Activated naive CD8-positive, alpha-beta T cell treated with anti-CD3 and anti-CD28 coated beads, Interleukin-2, amount 10 ng/mL, durations not matched to agents 7 days and 5 days (primary cell): ENCODE measurements at regions of chr2 and their contacts with region 1.

Region 1: DNA sequence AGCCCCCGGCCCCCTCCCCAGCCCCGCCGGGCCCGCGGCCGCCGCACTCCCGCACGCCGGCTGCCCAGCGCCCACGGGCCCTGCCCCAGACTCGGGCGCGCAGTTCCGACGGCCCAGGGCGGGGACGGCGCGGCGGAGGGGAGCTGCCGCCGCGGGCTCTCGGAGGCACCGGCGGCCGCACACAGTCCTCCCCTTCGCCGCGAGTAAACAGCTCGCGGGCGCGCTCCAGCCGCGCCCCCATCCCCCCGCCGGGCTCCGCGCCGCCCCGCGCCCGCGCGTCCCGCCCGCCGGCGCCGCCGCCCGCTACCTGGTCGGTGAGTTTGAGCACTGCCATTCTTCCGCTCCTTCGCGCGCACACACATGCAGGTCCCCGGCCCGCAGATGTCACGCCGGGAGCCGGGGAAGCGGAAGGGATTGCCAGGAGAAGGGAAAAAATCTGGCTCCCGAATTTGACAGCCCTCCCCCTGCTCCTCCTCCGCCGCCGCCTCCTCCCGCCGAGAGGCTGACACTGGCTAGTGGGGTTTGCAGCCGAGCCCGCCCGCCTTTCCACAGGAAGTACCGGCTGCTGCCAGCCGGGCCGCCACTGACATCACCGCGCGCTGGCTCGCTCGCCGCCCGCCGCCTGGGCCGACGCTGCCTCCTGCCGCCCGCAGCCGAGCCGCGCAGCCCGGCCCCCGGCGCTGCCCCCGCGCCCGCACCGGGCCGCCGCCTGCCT is at the start of gene ANKRD44:
- DNase-seq: peak; percentile 92
- ATAC-seq: peak; percentile 65
- H3K4me3 Mint-ChIP-seq: peak within 1 kb of the TSS; percentile 92
- H3K27ac Mint-ChIP-seq: peak within 1 kb of the TSS; percentile 92
- H3K4me1 Mint-ChIP-seq: peaks cover 57% of the 10 kb centered on the region
- H3K27me3 Mint-ChIP-seq: no peaks in the 10 kb centered on the region
- total RNA-seq, gene ANKRD44: 240 to 243 TPM

Region 2: DNA sequence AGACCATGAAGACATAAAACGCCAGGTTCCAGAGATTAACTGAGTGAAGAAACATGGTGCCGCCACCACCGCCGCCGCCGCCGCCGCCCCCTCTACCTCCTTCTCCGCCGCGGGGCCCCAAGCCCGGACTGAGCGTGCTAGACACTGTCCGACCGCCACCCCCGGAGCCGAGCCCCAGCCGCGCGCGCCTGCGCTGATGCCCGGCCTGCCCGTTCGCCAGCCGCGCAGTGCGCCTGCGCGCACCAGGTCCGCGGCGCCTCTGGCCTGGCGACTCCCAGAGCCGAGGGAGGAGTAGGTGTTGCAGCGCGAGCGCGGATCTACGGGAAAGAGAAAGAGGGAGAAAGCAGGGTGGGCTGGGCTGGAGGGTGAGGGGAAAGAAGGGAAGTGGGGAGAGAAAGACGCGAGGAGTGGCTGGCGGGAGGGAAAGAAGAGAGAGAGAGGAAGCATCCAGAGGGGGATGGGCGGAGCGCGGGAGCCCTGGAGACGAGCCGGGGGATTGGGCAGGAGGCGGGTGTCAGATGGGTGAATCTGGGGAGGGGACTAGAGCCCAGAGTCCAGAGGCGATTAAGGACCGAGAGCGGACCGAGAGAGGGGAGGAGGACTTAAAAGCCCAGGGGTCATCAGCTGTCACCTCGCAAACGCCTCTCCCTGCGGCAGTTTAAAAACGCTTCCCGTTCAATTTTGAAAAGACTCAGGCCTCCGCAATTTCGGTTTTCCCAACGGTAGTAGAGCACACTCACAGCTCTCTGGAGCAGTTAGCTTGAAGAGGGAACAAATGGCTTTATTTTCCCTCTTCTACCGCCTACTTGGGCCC is 383.7 kb before region 1 on chr2 and contains the start of gene PGAP1:
- POLR2A ChIA-PET with region 1: interaction called, 11 read pairs
- DNase-seq: peak; percentile 93
- ATAC-seq: peak; percentile 88
- H3K4me3 Mint-ChIP-seq: peak within 1 kb of the TSS; percentile 97
- H3K27ac Mint-ChIP-seq: peak within 1 kb of the TSS; percentile 94
- H3K4me1 Mint-ChIP-seq: peaks cover 28% of the 10 kb centered on the region
- H3K27me3 Mint-ChIP-seq: no peaks in the 10 kb centered on the region
- total RNA-seq, gene PGAP1: 40.8 to 44.9 TPM

Region 3: GRCh38 chr2:197198890-197199289 is 111.5 kb before region 1 on chr2:
- POLR2A ChIA-PET with region 1: interaction called, 94 read pairs
- DNase-seq: peak; percentile 83
- ATAC-seq: peak; percentile 83
- H3K4me3 Mint-ChIP-seq: peak overlapping the region; percentile 82
- H3K27ac Mint-ChIP-seq: peak overlapping the region; percentile 92
- H3K4me1 Mint-ChIP-seq: peaks cover 77% of the 10 kb centered on the region
- H3K27me3 Mint-ChIP-seq: no peaks in the 10 kb centered on the region

Region 4: GRCh38 chr2:197239434-197239833 is 71.0 kb before region 1 on chr2:
- POLR2A ChIA-PET with region 1: interaction called, 61 read pairs
- DNase-seq: no peak
- ATAC-seq: peak; percentile 45
- H3K4me3 Mint-ChIP-seq: peak overlapping the region; percentile 92
- H3K27ac Mint-ChIP-seq: peak overlapping the region; percentile 90
- H3K4me1 Mint-ChIP-seq: peaks cover 77% of the 10 kb centered on the region
- H3K27me3 Mint-ChIP-seq: no peaks in the 10 kb centered on the region

Region 5: GRCh38 chr2:197265924-197266323 is 44.5 kb before region 1 on chr2:
- POLR2A ChIA-PET with region 1: interaction called, 10 read pairs
- DNase-seq: no peak
- ATAC-seq: no peak
- H3K4me3 Mint-ChIP-seq: peak overlapping the region; percentile 76
- H3K27ac Mint-ChIP-seq: peak overlapping the region; percentile 84
- H3K4me1 Mint-ChIP-seq: peaks cover 84% of the 10 kb centered on the region
- H3K27me3 Mint-ChIP-seq: no peaks in the 10 kb centered on the region

Region 6: DNA sequence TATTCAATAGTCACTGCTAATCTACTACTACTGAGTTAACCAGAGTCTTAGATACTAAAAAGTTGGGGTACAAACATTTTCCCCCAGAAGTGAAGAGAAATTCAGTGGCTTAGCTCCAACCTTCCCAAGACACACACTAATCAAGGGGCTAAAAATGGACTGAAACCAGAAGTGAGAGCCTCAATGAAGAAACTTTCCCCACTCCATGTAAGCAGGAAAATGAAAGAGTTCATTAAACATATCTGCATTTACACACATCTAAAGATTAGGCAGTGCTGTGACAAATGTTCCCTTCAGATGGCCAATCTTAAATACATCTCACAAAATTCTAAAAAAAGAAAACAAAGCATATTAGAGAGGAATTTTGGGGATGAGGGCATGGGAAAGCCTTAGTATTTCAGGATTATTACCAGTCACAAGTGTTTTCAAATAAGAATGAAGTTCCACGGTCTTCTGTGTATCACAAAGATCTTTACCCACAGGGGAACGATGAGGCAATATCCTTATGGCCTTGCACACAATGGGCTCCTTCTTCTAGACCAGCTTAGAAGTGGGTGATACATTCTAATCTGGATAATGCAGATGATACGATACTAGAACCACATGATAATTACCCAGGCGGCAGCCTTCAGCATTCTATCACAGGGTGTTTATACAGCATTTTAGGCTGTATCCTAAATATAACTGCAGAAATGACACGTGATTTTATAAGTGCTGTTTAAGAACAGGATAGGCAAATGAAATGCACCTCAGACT is 17.0 kb before region 1 on chr2:
- POLR2A ChIA-PET with region 1: interaction called, 122 read pairs
- DNase-seq: no peak
- ATAC-seq: peak; percentile 72
- H3K4me3 Mint-ChIP-seq: peak overlapping the region; percentile 75
- H3K27ac Mint-ChIP-seq: peak overlapping the region; percentile 88
- H3K4me1 Mint-ChIP-seq: peaks cover 75% of the 10 kb centered on the region
- H3K27me3 Mint-ChIP-seq: no peaks in the 10 kb centered on the region

Region 7: DNA sequence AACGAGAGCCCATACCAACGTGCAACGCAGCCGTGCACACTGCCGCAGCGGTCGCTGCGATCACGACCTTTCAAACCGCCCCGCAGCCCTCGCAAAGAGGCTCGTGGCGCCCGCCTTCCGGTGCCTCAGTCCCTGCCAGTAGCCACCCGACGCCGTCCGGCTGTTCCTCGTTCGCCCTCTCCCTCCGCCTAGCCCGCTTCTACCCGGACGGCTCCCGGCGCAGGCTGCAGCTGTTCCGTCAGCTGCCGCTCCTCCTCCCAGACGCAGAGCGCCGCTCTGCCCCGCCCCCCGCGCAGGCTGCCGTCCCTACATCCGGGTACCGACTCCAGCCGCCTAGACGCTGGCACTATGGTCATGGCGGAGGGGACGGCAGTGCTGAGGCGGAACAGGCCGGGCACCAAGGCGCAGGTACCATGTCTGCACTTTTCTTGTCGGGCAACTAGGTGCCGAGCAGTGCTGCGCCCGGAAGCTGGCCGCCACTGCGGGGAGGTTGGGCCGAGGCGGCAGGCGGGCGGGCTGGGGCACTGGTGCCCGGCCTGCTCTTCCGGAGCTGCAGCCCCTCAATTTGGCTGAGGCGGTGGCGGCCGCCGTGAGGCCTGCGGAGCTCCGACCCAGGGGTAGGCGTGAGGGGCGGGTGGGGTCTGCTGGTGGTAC is 205.4 kb after region 1 on chr2 and contains the start of gene MOB4:
- POLR2A ChIA-PET with region 1: no interaction called
- DNase-seq: peak; percentile 98
- ATAC-seq: peak; percentile 94
- H3K4me3 Mint-ChIP-seq: peak within 1 kb of the TSS; percentile 91
- H3K27ac Mint-ChIP-seq: peak within 1 kb of the TSS; percentile 85
- H3K4me1 Mint-ChIP-seq: peaks cover 18% of the 10 kb centered on the region
- H3K27me3 Mint-ChIP-seq: no peaks in the 10 kb centered on the region
- total RNA-seq, gene MOB4: 17.2 to 18.1 TPM